ENCODE measurements at regions of chr7 and their contacts with region 1.

Region 1: DNA sequence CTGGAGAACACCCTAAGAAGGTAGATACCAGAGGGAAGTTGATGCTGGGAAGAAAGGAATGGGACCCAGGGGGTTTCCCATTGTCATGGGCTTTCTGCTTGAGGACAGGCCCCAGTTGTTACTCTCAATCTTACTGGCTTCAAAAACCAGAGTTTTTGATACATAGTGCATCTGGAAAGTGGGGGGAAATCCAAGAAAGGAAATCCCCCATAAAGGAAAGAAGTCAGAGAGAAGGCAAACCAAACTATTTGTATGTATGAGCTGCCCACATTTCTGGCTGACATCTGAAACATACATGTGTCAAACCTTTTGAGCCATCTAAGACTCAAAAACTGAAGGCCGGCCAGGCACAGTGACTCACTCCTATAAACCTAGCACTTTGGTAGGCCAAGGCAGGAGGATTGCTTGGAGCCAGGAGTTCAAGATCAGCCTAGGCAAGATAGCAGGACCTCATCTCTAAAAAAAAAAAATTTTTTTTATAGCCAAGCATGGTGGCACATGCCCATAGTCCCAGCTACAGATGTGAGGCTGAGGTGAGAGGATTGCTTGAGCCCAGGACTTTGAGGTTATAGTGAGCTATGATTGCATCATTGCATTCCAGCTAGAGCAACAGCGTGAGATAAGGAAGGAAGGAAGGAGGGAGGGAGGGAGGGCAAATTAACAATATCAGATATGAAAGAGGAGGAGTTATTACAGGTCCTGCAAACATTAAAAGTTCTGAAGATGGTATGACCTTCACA is 6.6 kb upstream of the COA1 start:
- DNase-seq: no peak

Region 2: GRCh38 chr7:43834463-43835251 is 98.7 kb after region 1 on chr7:
- intact Hi-C with region 1: loop called (anchors 10 kb)
- DNase-seq: no peak

Measured in head of caudate nucleus (tissue), 42 donors.